ENCODE measurements at regions of chr3 and their contacts with region 1.

Region 1: DNA sequence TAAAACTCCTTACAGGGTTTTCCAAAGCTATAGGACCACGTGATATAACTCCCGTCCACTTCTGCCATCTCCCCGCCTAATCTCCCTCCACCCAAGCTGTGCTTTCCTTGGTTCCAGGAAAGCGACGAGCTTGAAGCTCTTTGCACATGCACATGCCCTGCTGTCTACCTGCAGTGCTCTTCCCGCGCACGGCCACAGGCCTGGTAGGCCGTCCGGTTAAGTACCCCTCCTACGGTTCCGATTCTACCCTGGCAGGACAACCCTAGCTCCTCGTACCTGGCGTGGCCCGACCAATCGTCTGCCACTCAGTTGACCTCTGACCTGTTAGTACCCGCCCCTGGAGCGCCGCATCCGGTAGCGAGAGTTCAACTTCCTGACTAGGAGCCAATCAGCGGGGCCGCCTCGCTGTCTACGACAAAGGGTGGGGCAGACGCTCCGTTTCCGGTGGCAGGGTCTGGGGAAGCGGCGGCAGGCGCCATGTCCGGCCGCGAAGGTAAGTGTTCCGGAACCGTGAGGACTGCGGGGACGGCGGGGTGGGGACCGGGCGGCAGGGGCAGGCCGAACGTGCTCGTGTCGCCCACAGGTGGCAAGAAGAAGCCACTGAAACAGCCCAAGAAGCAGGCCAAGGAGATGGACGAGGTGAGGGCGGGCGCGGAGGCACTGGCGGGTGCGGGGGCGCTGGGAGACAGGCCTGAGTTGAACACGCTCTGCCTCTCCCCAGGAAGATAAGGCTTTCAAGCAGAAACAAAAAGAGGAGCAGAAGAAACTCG is at the starts of genes CCDC51 and TMA7:
- DNase-seq: peak; percentile 77
- H3K4me3 ChIP-seq: peak within 1 kb of the TSS; percentile 68
- H3K27me3 ChIP-seq: no peaks in the 10 kb centered on the region
- CTCF ChIP-seq: no peak
- polyA plus RNA-seq, gene CCDC51: 11.6 and 14.3 TPM in 2 replicates
- polyA plus RNA-seq, gene TMA7: 53.8 and 162 TPM in 2 replicates

Region 2: DNA sequence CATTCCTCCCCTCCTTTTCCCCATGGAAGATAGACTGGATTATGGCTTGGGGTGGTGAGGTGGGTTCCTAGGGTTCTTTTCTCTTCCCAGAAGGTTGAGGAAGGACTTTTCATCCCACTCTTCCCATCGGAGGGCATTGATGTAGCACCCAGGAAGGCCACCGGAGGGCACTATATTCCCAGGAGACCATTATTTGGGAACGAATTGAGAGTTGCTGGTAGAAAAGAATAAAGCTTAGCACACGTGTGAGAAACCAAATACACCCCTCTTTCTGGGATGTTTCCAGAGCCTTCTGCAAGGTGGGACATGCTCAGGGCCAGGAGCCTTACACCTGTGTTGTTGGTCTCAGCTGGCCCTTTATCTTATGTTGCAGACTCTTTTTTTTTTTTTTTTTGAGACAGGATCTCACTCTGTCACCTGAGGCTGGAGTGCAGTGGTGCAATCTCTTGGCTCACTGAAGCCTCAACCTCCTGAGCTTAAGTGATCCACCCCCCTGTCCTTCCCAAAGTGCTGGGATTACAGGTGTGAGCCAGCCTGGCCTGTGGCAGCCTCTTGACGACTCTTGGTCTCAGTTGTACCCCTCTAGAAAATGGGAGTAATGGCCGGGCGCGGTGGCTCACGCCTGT is 245.4 kb before region 1 on chr3:
- CTCF ChIA-PET with region 1: interaction called, 29 read pairs
- POLR2A ChIA-PET with region 1: no interaction called
- DNase-seq: no peak
- H3K4me3 ChIP-seq: no peak overlapping the region
- H3K27me3 ChIP-seq: no peaks in the 10 kb centered on the region
- CTCF ChIP-seq: peak; percentile 84

Region 3: GRCh38 chr3:48273594-48274211 is 166.3 kb before region 1 on chr3:
- CTCF ChIA-PET with region 1: interaction called, 263 read pairs
- POLR2A ChIA-PET with region 1: no interaction called
- DNase-seq: no peak
- H3K4me3 ChIP-seq: no peak overlapping the region
- H3K27me3 ChIP-seq: no peaks in the 10 kb centered on the region
- CTCF ChIP-seq: peak; percentile 82

Region 4: GRCh38 chr3:48388966-48389365 is 51.0 kb before region 1 on chr3:
- CTCF ChIA-PET with region 1: interaction called, 10 read pairs
- POLR2A ChIA-PET with region 1: no interaction called
- DNase-seq: no peak
- H3K4me3 ChIP-seq: no peak overlapping the region
- H3K27me3 ChIP-seq: peaks cover 6% of the 10 kb centered on the region
- CTCF ChIP-seq: no peak

Region 5: GRCh38 chr3:48415554-48415953 is 24.5 kb before region 1 on chr3:
- CTCF ChIA-PET with region 1: interaction called, 12 read pairs
- POLR2A ChIA-PET with region 1: no interaction called
- DNase-seq: no peak
- H3K4me3 ChIP-seq: no peak overlapping the region
- H3K27me3 ChIP-seq: no peaks in the 10 kb centered on the region
- CTCF ChIP-seq: no peak

Region 6: GRCh38 chr3:49998326-49998725 is 1558.3 kb after region 1 on chr3:
- CTCF ChIA-PET with region 1: no interaction called
- POLR2A ChIA-PET with region 1: no interaction called
- DNase-seq: peak; percentile 11
- H3K4me3 ChIP-seq: no peak overlapping the region
- H3K27me3 ChIP-seq: no peaks in the 10 kb centered on the region
- CTCF ChIP-seq: 0 out of 2 replicates have a peak, but pooled peaks have one; percentile 4